ENCODE measurements at regions of chr15 and their contacts with region 1.

Region 1: GRCh38 chr15:97929884-97930638 is 30.4 kb upstream of the ARRDC4 start:
- DNase-seq: no peak
- ATAC-seq: no peak
- H3K4me3 ChIP-seq: no peak overlapping the region
- H3K4me3 Mint-ChIP-seq: no peak overlapping the region
- H3K27ac ChIP-seq: no peak overlapping the region
- H3K27ac Mint-ChIP-seq: no peak overlapping the region
- H3K4me1 ChIP-seq: no peaks in the 10 kb centered on the region
- H3K4me1 Mint-ChIP-seq: no peaks in the 10 kb centered on the region
- H3K27me3 ChIP-seq: no peaks in the 10 kb centered on the region
- H3K27me3 Mint-ChIP-seq: no peaks in the 10 kb centered on the region
- CTCF ChIP-seq: no peak

Region 2: DNA sequence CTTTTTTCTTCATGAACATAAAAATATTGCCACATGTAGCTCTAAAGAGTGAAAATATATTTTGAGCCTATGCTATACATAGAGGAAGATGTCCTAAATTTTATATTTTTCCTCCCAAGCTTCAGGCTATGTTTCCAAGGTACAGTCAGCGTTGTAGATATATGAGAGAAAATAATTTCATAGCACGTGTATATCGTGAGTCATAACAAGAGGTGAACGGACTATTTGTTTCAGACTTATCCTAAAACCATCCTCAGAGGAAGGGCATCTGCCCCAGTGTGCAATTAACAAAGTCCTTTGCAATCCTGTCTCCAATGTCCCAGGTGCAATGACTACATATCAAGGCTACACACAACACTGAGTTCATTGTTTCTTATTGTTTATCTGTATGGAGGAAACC is 146.8 kb before region 1 on chr15:
- CTCF ChIA-PET with region 1: no interaction called
- POLR2A ChIA-PET with region 1: no interaction called
- intact Hi-C with region 1: no loop called
- DNase-seq: no peak
- ATAC-seq: no peak
- H3K4me3 ChIP-seq: no peak overlapping the region
- H3K4me3 Mint-ChIP-seq: no peak overlapping the region
- H3K27ac ChIP-seq: no peak overlapping the region
- H3K27ac Mint-ChIP-seq: no peak overlapping the region
- H3K4me1 ChIP-seq: no peaks in the 10 kb centered on the region
- H3K4me1 Mint-ChIP-seq: no peaks in the 10 kb centered on the region
- H3K27me3 ChIP-seq: no peaks in the 10 kb centered on the region
- H3K27me3 Mint-ChIP-seq: no peaks in the 10 kb centered on the region
- CTCF ChIP-seq: no peak

Region 3: DNA sequence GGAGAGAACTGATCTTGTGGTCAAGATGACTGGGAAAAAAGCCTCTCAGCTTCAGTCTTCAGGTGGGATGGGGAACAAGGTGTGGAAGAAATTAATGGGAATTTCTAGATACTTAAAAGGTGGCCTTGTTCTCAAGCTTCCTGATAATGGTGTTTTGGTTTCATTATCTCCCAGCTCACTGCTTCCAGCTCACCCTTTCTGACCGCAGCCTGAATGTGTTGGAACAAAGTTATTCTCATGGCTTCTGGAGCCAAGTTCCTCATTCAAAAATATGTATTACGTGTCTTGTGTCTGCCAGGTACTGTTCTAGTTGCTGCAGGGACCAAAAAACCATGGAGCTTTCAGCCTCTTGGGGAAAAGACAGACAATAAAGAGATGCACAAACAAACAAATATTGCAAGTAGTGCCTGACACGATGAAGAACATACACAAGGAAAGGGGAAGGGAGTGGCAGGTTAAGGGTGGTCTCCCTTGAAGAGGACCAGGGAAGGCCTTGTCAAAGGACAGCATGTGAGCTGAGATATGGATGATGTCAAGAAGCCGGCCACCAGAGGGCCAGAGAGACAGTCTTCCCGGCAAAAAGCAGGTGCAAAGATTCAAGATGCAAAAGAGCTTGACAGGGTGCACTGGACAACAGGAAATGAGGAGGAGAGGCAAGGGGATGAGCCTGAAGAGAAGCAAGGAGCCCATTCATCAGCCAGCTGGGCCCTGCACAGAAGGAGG is 66.0 kb after region 1 on chr15:
- CTCF ChIA-PET with region 1: no interaction called
- POLR2A ChIA-PET with region 1: no interaction called
- intact Hi-C with region 1: loop called in 1 of 2 experiments (anchors 10 kb)
- DNase-seq: peak in 1 of 14 experiments; percentile 12
- ATAC-seq: no peak
- H3K4me3 ChIP-seq: no peak overlapping the region
- H3K4me3 Mint-ChIP-seq: peak overlapping the region; percentile 3
- H3K27ac ChIP-seq: no peak overlapping the region
- H3K27ac Mint-ChIP-seq: no peak overlapping the region
- H3K4me1 ChIP-seq: no peaks in the 10 kb centered on the region
- H3K4me1 Mint-ChIP-seq: peaks cover 16% of the 10 kb centered on the region
- H3K27me3 ChIP-seq: no peaks in the 10 kb centered on the region
- H3K27me3 Mint-ChIP-seq: no peaks in the 10 kb centered on the region
- CTCF ChIP-seq: peak; percentile 16